ENCODE measurements at regions of chr7 and their contacts with region 1.

Region 1: GRCh38 chr7:152463709-152464311 is 28.0 kb upstream of the KMT2C start:
- DNase-seq: peak; percentile 100
- H3K4me3 ChIP-seq: peak overlapping the region; percentile 70 to 98 (median 89)
- H3K27ac ChIP-seq: peak overlapping the region; percentile 90 to 100 (median 99)
- H3K27me3 ChIP-seq: no peaks in the 10 kb centered on the region
- CTCF ChIP-seq: peak in 10 of 56 donors; percentile 3 to 27 (median 11)

Region 2: DNA sequence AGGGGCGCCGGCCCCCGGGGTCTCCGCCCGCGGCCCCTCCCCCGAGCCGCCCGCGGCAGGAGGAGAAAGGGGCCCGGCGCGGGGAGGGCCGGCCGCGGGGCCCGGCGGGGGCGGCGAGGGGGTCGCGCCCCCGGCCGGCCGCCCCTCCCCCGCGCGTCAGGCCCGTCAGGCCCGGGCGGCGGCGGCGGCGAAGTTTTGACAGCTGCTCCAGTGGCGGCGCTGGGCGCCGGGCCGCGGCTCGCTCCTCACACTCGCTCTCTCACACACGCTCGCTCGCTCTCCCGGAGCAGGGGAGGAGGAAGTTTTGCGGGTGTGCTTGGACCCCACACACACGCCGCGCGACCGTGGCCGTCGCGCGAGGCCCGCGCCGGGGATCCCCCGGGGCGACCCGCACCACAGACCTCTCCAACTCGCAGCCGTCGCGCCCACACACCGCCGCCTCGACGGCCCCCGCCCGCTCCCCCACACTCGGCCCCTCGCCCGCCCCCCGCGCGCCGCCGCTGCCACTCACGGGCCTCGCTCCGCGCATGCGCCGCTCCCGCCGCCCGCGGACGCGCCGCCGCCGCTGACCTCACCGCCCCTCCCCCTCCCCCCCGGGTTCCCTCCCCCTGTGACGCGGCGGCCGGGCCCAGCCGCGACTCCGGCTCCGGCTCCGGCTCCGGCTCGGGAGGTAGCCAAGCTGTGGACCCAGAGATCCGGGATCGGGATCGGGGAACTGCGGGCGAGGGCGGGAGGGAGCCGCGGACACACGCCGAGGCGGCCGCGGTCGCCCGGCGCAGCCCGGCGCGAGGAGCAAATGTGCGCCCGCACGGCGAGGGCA is 27.5 kb before region 1 on chr7:
- intact Hi-C with region 1: loop called (anchors 1 kb)
- DNase-seq: peak; percentile 81 to 95 (median 92)
- H3K4me3 ChIP-seq: peak overlapping the region; percentile 50 to 87 (median 67)
- H3K27ac ChIP-seq: peak overlapping the region; percentile 49 to 99 (median 95)
- H3K27me3 ChIP-seq: no peaks in the 10 kb centered on the region
- CTCF ChIP-seq: peak in 4 of 56 donors; percentile 10 to 23 (median 20)

Region 3: GRCh38 chr7:152522571-152523067 is 58.8 kb after region 1 on chr7:
- intact Hi-C with region 1: loop called in 1 of 2 experiments (anchors 5 kb)
- DNase-seq: peak in 9 of 10 donors; percentile 5 to 54 (median 45)
- H3K4me3 ChIP-seq: peak overlapping the region in 56 of 59 donors; percentile 6 to 66 (median 44)
- H3K27ac ChIP-seq: peak overlapping the region in 7 of 59 donors; percentile 5 to 52 (median 41)
- H3K27me3 ChIP-seq: no peaks in the 10 kb centered on the region
- CTCF ChIP-seq: no peak

Region 4: GRCh38 chr7:152743201-152743952 is 279.6 kb after region 1 on chr7:
- intact Hi-C with region 1: no loop called
- DNase-seq: no peak
- H3K4me3 ChIP-seq: no peak overlapping the region
- H3K27ac ChIP-seq: no peak overlapping the region
- H3K27me3 ChIP-seq: no peaks in the 10 kb centered on the region
- CTCF ChIP-seq: no peak

Measured in dorsolateral prefrontal cortex (tissue), 120 donors.